HEK293 (cell line): ENCODE measurements at regions of chr1 and their contacts with region 1.

Region 1: DNA sequence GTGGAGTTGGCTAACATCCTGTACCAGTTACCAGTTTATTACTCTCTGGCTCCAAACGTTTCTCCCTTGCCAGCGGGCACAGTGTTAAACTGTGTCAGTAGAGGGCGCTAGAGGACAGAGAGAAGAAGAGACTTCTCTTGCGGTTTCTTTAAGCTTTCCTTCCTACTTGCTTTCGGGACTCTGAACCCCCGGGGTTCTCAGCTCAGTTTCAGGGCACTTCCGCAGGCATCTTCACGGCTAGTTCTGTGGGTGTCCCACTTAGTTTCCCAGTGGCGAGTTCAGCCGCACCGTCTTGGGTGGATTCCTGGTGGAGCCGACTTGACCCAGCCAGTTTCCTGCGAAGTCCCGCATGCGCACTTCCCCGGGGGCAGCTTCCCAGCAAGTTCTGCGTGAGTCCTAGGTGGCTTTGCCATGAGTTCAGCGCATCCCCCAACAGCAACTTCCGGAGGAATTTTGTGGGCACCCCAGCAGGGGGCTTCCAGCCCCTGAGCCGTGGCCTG is 37.9 kb upstream of the BTG2 start:
- H3K4me3 ChIP-seq: peak overlapping the region; percentile 58
- H3K27ac ChIP-seq: no peak overlapping the region; the same call in 1 of the 2 replicates
- H3K4me1 ChIP-seq: no peaks in the 10 kb centered on the region
- CTCF ChIP-seq: peak; percentile 72

Region 2: DNA sequence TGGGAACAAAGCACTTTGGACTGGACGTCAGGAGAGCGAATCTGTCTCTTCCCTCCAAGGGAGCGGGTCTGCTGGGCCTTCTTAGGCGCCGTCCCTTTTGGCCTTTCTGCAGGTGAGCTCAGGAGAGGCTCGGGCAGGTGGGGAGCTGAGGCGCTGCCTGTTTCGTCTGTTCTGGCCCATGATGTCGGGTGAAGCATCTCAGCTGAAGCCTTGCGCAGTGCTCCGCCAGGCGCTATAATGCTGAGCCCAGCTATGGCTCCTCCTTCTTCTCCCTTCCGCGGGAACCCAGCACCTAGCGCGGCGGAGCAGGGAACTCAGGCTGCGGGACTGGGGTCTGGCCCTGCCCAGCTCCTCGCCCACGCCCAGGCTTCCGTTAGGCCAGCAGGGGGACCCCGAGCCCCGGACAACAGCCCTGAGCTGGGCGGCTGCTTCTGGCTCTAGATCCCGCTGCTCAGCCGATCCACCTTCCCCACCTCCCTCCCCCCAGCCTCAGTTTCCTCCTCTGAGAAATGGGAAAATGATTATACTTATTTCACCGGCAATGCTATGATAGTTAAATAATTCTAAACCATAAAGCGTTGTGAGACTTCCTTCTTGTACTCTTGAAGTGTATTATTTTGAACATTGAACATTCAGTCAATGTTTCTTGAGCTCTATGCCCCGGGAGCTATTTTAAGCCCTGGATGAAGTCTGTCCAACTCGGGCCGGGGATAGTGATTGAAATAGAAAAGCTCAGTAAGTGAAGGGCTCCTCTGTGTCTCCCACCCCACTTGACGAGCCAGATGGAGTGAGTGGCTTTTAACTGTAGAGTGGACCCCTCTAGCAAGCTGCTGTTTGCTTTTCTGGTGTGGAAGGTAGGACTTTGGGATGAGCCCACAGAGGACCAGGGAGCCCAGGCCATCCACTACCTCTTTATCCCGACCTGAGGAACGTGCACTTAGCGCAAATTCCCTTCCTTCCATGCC is 149.5 kb before region 1 on chr1:
- CTCF ChIA-PET with region 1: interaction called, 102 read pairs
- POLR2A ChIA-PET with region 1: interaction called, 4 read pairs
- H3K4me3 ChIP-seq: no peak overlapping the region
- H3K27ac ChIP-seq: no peak overlapping the region
- H3K4me1 ChIP-seq: no peaks in the 10 kb centered on the region
- CTCF ChIP-seq: peak; percentile 92

Region 3: DNA sequence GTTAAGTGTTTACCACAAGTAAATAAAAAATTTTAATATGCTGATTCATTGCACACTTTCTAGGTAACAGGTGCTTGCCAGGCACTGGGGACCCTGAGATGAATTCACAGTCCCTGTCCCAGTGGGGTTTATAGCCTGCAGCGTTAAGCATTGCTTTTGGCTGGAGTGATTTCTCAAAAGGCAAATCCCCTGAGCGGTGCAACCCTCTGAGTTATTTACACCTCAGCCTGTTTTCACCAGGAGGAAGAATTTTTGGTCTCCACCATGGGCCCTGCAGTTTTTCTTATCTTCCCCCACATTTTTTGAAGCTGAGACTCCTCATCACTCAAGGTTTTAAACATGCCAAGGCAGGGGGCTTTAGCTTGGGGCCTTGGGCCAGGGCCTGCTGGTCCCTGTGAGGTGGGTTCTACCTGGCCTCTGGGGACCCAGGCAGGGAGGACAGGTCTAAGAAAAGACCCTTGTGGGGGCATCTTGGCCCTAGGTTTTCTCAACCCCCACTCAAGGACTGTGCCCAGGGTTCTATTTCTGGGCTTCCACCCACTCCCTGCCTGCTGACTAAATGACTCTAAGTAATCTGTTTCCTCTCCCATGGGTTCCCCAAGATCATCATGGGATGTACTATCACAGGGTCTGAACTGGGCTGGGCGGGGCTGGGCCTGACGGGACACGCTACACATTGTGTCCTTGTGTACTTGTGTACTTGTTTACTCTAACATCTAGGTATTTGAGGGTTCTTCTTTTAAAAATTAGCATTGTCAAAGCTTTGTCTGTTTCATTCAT is 27.7 kb before region 1 on chr1:
- CTCF ChIA-PET with region 1: interaction called, 31 read pairs
- POLR2A ChIA-PET with region 1: no interaction called
- H3K4me3 ChIP-seq: no peak overlapping the region
- H3K27ac ChIP-seq: no peak overlapping the region
- H3K4me1 ChIP-seq: no peaks in the 10 kb centered on the region
- CTCF ChIP-seq: no peak

Region 4: GRCh38 chr1:203290261-203291089 is 23.1 kb after region 1 on chr1:
- CTCF ChIA-PET with region 1: interaction called, 20 read pairs
- POLR2A ChIA-PET with region 1: no interaction called
- H3K4me3 ChIP-seq: no peak overlapping the region
- H3K27ac ChIP-seq: peak overlapping the region; percentile 20; the same call in 1 of the 2 replicates
- H3K4me1 ChIP-seq: peaks cover 11% of the 10 kb centered on the region
- CTCF ChIP-seq: no peak

Region 5: DNA sequence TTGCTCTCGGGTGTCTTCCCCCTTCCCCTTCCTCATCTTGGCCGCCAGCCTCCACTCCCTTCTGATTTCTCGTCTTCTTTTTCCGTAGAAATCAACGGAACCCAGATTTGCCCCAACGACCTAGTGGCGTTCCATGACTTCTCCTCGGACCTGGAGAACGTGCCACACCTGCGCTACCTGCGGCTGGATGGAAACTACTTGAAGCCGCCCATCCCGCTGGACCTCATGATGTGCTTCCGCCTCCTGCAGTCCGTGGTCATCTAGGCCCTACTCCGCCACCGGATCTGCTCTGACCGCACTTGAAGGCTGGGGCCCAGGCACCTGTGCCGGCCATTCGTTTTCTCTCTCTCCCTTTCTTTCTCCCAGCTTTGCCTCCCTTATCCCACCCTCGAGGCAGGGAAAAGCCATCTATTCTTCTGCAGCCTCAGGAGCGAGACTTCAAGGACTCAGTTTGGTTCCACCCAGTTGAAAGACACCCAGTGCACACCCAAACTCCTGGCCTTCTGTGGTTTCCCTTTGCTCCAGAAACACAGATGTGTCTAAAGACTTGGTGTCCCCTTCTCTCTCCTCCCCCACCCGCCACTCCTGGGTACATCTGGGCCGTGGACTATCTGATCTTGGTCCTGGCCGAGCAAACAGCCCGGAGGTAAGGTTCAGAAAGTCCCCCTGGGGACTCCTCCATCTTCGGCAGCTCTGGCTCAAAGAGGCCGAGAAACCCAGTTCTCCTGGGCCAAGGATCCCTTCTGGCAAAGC is 219.4 kb after region 1 on chr1:
- CTCF ChIA-PET with region 1: interaction called, 25 read pairs
- POLR2A ChIA-PET with region 1: no interaction called
- H3K4me3 ChIP-seq: no peak overlapping the region
- H3K27ac ChIP-seq: peak overlapping the region; percentile 10; the same call in 1 of the 2 replicates
- H3K4me1 ChIP-seq: no peaks in the 10 kb centered on the region
- CTCF ChIP-seq: no peak